CD8-positive, alpha-beta T cell (primary cell): ENCODE measurements at regions of chr20 and their contacts with region 1.

Region 1: GRCh38 chr20:35771689-35772562 is at the start of gene PHF20:
- DNase-seq: peak; percentile 100
- ATAC-seq: peak; percentile 82
- H3K4me3 ChIP-seq: peak within 1 kb of the TSS; percentile 65 to 71
- H3K4me3 Mint-ChIP-seq: peak within 1 kb of the TSS; percentile 91
- H3K27ac ChIP-seq: peak within 1 kb of the TSS; percentile 87 to 95
- H3K27ac Mint-ChIP-seq: peak within 1 kb of the TSS; percentile 100
- H3K4me1 ChIP-seq: peaks cover 89% of the 10 kb centered on the region
- H3K4me1 Mint-ChIP-seq: peaks cover 81% of the 10 kb centered on the region
- H3K27me3 ChIP-seq: no peaks in the 10 kb centered on the region
- H3K27me3 Mint-ChIP-seq: no peaks in the 10 kb centered on the region
- CTCF ChIP-seq: no peak
- total RNA-seq, gene PHF20: 101 to 107 TPM

Region 2: GRCh38 chr20:35497780-35498189 is 274.1 kb before region 1 on chr20:
- CTCF ChIA-PET with region 1: no interaction called
- POLR2A ChIA-PET with region 1: no interaction called
- intact Hi-C with region 1: no loop called
- DNase-seq: no peak
- ATAC-seq: no peak
- H3K4me3 ChIP-seq: no peak overlapping the region
- H3K4me3 Mint-ChIP-seq: no peak overlapping the region
- H3K27ac ChIP-seq: no peak overlapping the region
- H3K27ac Mint-ChIP-seq: no peak overlapping the region
- H3K4me1 ChIP-seq: peaks cover 13% of the 10 kb centered on the region
- H3K4me1 Mint-ChIP-seq: peaks cover 24% of the 10 kb centered on the region
- H3K27me3 ChIP-seq: no peaks in the 10 kb centered on the region
- H3K27me3 Mint-ChIP-seq: no peaks in the 10 kb centered on the region
- CTCF ChIP-seq: no peak

Region 3: DNA sequence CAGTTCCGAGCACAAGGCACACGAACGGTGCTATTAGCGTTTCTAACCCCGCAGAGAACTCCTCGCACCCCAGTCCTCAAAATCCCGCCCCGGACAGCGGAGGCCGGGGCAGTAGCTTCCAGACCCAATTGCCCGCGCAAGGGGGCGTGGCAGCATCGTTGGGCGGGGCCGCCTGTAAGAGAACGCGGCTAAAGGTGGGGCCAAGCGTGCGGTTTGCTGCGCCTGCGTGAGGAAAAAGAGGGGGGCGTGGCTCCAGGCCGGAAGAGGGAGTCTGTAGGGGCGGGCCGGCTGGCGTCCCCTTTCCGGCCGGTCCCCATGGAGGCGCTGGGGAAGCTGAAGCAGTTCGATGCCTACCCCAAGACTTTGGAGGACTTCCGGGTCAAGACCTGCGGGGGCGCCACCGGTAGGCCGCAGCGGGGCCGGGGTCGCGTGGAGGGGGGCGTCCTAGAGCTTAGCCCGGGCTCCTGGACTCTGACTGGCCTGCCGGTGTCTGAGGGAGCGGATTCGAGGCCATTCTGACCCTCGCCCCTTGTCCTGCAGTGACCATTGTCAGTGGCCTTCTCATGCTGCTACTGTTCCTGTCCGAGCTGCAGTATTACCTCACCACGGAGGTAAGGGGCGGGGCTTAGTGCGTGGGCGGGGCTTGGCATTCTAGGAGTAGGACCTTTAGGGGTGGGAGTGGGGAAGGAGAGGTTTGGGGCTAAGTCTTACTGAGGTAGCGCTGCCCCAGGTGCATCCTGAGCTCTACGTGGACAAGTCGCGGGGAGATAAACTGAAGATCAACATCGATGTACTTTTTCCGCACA is 229.9 kb before region 1 on chr20 and contains the start of gene ERGIC3:
- CTCF ChIA-PET with region 1: no interaction called
- POLR2A ChIA-PET with region 1: no interaction called
- intact Hi-C with region 1: loop called (anchors 1 to 5 kb)
- DNase-seq: peak; percentile 93 to 98 (median 97)
- ATAC-seq: peak; percentile 97
- H3K4me3 ChIP-seq: peak within 1 kb of the TSS; percentile 81 to 94
- H3K4me3 Mint-ChIP-seq: peak within 1 kb of the TSS; percentile 89
- H3K27ac ChIP-seq: peak within 1 kb of the TSS; percentile 71 to 86
- H3K27ac Mint-ChIP-seq: peak within 1 kb of the TSS; percentile 89
- H3K4me1 ChIP-seq: peaks cover 14% of the 10 kb centered on the region
- H3K4me1 Mint-ChIP-seq: peaks cover 27% of the 10 kb centered on the region
- H3K27me3 ChIP-seq: no peaks in the 10 kb centered on the region
- H3K27me3 Mint-ChIP-seq: no peaks in the 10 kb centered on the region
- CTCF ChIP-seq: no peak
- total RNA-seq, gene ERGIC3: 149 TPM

Region 4: DNA sequence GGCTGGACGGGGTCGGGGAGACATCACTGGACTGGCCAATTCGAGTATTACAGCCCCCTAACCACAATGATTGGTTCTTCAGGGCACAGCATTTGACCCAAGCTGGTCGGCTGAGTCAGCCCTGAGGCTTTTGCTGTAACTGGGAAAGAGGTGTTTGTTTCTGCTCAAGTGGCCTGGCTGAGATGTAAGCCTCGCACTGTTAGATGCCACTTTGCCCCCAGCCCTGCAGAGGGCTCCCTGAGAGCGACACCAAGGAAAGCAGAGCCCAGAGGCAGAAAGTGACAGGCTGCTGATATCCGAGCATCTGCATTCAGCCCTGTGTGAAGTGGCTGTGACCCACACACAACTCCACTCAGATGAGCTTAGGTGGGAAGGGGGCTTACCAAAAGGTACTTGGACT is 210.7 kb before region 1 on chr20:
- CTCF ChIA-PET with region 1: no interaction called
- POLR2A ChIA-PET with region 1: no interaction called
- intact Hi-C with region 1: no loop called
- DNase-seq: peak in 3 of 9 experiments; percentile 24 to 42 (median 37)
- ATAC-seq: peak; percentile 70
- H3K4me3 ChIP-seq: no peak overlapping the region
- H3K4me3 Mint-ChIP-seq: no peak overlapping the region
- H3K27ac ChIP-seq: no peak overlapping the region
- H3K27ac Mint-ChIP-seq: no peak overlapping the region
- H3K4me1 ChIP-seq: no peaks in the 10 kb centered on the region
- H3K4me1 Mint-ChIP-seq: no peaks in the 10 kb centered on the region
- H3K27me3 ChIP-seq: no peaks in the 10 kb centered on the region
- H3K27me3 Mint-ChIP-seq: peaks cover 5% of the 10 kb centered on the region
- CTCF ChIP-seq: no peak

Region 5: DNA sequence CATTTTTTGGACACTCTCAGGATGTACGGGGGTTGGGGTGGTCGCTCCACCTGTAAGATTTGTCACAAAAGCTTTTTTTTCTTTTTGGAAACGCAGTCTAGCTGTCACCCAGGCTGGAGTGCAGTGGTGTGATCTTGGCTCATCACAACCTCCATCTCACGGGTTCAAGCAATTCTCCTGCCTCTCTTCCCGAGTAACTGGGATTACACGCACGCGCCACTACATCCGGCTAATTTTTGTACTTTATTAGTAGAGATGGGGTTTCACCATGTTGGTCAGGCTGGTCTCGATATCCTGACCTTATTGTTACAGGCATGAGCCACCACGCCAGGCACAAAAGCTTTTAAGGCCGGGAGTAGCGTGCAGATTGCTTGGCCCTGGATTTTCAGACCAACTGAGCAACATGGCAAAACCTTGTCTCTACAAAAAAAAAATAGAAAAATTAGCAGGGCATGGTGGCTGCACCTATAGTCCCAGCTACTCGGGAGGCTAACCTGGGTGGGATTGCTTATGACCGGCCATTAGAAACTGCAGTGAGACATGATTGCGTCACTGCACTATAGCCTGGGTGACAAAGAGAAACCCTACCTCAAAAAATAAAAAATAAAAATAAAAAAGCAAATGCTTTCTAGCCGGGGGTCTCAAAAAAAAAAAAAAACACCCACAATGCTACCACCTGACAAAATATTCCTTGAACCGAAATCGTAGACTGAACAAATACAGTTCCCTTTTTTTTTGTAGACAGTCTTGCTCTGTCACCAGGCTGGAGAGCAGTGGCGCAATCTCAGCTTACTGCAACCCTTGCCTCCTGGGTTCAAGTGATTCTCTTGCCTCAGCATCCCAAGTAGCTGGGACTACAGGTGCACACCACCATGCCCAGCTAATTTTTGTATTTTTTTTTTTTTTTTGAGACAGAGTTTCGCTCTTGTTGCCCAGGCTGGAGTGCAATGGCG is 44.9 kb before region 1 on chr20:
- CTCF ChIA-PET with region 1: interaction called, 3 read pairs
- POLR2A ChIA-PET with region 1: interaction called, 3 read pairs
- intact Hi-C with region 1: loop called (anchors 10 kb)
- DNase-seq: no peak
- ATAC-seq: no peak
- H3K4me3 ChIP-seq: no peak overlapping the region
- H3K4me3 Mint-ChIP-seq: no peak overlapping the region
- H3K27ac ChIP-seq: no peak overlapping the region
- H3K27ac Mint-ChIP-seq: no peak overlapping the region
- H3K4me1 ChIP-seq: peaks cover 30% of the 10 kb centered on the region
- H3K4me1 Mint-ChIP-seq: peaks cover 58% of the 10 kb centered on the region
- H3K27me3 ChIP-seq: no peaks in the 10 kb centered on the region
- H3K27me3 Mint-ChIP-seq: no peaks in the 10 kb centered on the region
- CTCF ChIP-seq: no peak

Region 6: DNA sequence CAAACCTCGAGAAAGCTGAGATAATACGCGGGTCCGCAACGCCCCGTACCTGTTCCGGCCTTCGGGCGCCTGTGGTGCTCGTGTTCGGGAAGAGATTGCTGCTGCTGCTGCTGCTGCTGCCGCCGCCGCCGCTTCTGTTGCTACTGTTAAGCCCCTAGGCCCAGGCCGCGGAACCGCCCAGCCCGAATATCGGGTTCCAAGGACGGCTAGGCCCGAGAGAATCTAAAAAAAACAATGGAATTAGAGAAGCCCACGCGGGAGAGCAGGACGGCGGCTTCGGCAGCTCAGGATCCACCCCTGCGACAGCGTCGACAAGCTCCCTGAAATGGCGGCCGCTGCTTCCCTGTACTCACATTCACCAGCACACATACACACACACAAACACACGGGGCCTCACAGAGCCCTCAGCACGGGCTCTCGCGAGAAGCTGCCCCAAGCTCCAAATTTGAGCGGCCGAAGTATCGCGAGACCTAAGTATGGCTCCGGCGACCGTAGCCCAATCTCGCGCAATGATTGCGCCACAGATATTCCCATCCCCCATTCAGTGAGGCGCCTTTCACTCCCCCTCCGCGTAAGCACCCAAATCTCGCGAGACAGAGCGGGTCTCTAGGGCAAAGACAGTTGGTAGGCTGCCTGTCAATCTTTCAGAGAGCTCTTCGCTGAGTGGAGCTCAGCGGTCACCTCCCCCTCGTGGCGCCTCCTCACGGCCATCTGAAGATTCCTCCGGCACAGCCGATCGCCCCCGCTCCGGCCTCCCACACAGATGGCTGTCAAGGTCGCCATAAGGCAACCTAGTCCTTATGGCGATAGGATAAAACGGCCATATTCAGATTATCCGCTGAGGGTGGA is 29.8 kb before region 1 on chr20 and contains the start of gene RBM39:
- CTCF ChIA-PET with region 1: interaction called, 19 read pairs
- POLR2A ChIA-PET with region 1: interaction called, 370 read pairs
- intact Hi-C with region 1: loop called (anchors 1 kb)
- DNase-seq: peak; percentile 97 to 100 (median 99)
- ATAC-seq: peak; percentile 81
- H3K4me3 ChIP-seq: peak within 1 kb of the TSS; percentile 87 to 98
- H3K4me3 Mint-ChIP-seq: peak within 1 kb of the TSS; percentile 96
- H3K27ac ChIP-seq: peak within 1 kb of the TSS; percentile 99 to 100
- H3K27ac Mint-ChIP-seq: peak within 1 kb of the TSS; percentile 100
- H3K4me1 ChIP-seq: peaks cover 44% of the 10 kb centered on the region
- H3K4me1 Mint-ChIP-seq: peaks cover 47% of the 10 kb centered on the region
- H3K27me3 ChIP-seq: no peaks in the 10 kb centered on the region
- H3K27me3 Mint-ChIP-seq: no peaks in the 10 kb centered on the region
- CTCF ChIP-seq: peak; percentile 44
- total RNA-seq, gene RBM39: 1,168 to 1,202 TPM

Region 7: DNA sequence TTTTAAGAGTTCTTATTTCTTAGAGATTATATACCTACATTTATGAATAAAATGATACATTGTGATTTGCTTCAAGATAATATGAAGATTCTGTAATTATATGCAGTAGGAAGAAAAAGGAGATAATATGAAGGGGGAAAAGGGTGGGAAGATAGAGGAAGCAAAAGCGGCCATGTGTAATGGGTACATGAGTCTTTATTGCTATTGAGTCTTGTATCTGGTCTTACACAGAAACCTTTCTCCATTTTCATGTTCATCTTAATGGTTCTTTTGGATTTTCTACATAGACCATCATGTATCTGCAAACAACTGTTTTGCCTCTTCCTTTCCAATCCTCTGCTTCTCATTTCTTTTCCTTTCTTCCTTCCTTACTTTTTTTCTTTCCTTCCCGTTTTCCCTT is 36.0 kb after region 1 on chr20:
- CTCF ChIA-PET with region 1: no interaction called
- POLR2A ChIA-PET with region 1: no interaction called
- intact Hi-C with region 1: no loop called
- DNase-seq: no peak
- ATAC-seq: no peak
- H3K4me3 ChIP-seq: no peak overlapping the region
- H3K4me3 Mint-ChIP-seq: no peak overlapping the region
- H3K27ac ChIP-seq: no peak overlapping the region
- H3K27ac Mint-ChIP-seq: peak overlapping the region; percentile 37
- H3K4me1 ChIP-seq: no peaks in the 10 kb centered on the region
- H3K4me1 Mint-ChIP-seq: peaks cover 19% of the 10 kb centered on the region
- H3K27me3 ChIP-seq: no peaks in the 10 kb centered on the region
- H3K27me3 Mint-ChIP-seq: no peaks in the 10 kb centered on the region
- CTCF ChIP-seq: no peak

Region 8: DNA sequence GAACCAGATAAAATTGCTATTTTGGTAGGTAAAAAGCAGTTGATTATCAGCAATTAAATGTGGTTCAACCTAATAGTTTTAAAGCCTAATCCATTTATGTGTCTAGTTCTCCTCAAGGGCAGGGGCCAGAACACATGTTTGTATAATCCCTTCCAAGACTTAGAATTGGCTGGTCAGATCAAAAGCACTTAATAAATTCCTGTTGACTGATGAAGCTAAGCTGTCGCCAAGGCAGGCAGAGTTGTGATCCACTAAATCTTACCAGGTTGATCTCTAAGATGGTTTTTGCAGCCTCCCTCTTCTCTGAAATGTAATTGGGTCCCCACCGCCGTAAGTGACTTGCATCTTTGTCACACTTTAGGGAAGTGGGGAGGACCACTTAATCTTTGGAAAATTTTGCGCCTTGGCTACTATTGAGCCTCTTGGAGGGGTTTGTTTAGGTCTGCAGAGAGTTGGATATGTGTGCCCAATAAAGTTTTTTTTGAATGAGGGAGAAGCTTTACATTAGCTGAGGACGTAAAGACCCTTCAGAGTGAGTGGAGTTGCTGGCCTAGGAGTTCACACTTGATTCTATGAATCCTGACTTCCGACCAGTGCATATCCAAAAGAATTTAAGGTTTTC is 65.8 kb after region 1 on chr20:
- CTCF ChIA-PET with region 1: no interaction called
- POLR2A ChIA-PET with region 1: no interaction called
- intact Hi-C with region 1: no loop called
- DNase-seq: no peak
- ATAC-seq: no peak
- H3K4me3 ChIP-seq: no peak overlapping the region
- H3K4me3 Mint-ChIP-seq: no peak overlapping the region
- H3K27ac ChIP-seq: peak overlapping the region in 1 of 2 experiments; percentile 19
- H3K27ac Mint-ChIP-seq: peak overlapping the region; percentile 10
- H3K4me1 ChIP-seq: peaks cover 22% of the 10 kb centered on the region
- H3K4me1 Mint-ChIP-seq: peaks cover 51% of the 10 kb centered on the region
- H3K27me3 ChIP-seq: no peaks in the 10 kb centered on the region
- H3K27me3 Mint-ChIP-seq: no peaks in the 10 kb centered on the region
- CTCF ChIP-seq: no peak